ENCODE measurements at regions of chr12 and their contacts with region 1.

Region 1: DNA sequence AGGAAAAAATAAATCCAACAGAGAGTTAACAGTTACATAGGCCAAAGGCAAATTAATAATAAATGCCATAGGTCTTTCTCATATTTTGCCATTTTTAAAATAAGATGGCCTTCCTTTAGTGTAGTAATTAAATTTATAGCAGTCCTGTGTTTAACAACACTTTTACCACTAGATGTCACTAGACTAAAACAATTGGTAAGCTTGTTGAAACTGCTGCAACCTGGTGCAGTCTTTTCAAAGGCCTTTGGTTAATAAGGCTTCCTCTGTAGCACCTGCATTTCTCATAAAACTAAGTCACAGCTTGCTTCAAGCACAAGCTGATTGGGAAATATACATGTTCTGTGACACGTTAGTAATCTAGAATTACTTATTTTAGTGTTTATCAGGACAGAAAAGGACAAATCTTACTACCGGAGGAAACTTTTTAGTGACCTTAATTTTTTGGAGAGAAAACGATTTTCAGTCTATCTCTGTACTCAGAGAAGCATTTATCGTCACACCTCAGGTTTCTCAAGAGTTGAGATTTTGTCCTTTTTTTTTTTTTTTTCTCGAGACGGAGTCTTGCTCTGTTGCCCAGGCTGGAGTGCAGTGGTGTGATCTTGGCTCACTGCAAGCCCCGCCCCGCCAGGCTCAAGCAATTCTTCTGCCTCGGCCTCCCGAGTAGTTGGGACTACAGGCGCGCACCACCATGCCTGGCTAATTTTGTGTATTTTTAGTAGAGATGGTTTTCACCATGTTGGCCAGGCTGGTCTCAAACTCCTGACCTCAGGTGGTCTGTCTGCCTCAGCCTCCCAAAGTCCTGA is 20.0 kb downstream of the BORCS5 start:
- DNase-seq: no peak
- H3K4me3 ChIP-seq: no peak overlapping the region
- H3K27ac ChIP-seq: no peak overlapping the region
- H3K4me1 ChIP-seq: peaks cover 14% of the 10 kb centered on the region
- H3K27me3 ChIP-seq: no peaks in the 10 kb centered on the region
- CTCF ChIP-seq: peak; percentile 80

Region 2: GRCh38 chr12:12425616-12426015 is 48.8 kb after region 1 on chr12:
- intact Hi-C with region 1: no loop called
- DNase-seq: no peak
- H3K4me3 ChIP-seq: no peak overlapping the region
- H3K27ac ChIP-seq: no peak overlapping the region
- H3K4me1 ChIP-seq: peaks cover 12% of the 10 kb centered on the region
- H3K27me3 ChIP-seq: no peaks in the 10 kb centered on the region
- CTCF ChIP-seq: no peak

Region 3: DNA sequence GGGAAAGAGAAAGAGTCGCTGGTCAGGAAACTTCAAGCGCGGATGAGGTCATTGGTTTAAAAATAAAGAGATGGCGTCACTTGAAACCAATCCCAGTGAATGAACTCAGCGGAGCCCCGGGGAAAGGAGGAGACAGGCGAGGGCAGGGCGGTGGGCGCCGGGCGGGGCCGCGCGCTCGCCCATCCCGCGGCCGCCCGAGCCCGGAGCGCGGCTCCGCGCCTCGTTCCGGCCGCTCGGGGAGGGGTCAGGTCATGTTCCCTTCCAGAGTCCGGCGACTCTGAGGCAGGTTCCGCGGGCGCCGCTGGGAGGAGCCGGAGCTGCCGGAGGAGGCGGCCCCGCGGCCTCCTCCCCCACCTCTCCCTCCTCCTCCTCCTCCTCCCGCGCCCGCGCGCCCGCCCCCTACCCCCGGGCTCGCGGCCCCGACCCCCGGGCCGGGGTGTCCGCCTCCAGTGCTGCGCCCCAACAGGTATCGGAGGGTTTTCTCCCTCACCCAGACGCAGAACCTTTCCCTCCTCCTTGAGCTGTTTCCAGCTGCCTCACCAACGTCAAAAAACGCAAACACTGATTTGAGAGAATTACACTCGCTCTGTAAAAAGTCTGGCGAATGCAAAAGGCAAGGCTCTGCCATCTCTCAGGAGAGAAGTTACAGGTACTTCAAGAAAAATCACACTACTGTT is 185.9 kb after region 1 on chr12 and contains the start of gene DUSP16:
- intact Hi-C with region 1: loop called (anchors 5 kb)
- DNase-seq: peak; percentile 92
- H3K4me3 ChIP-seq: peak within 1 kb of the TSS; percentile 70
- H3K27ac ChIP-seq: peak within 1 kb of the TSS; percentile 100
- H3K4me1 ChIP-seq: peaks cover 34% of the 10 kb centered on the region
- H3K27me3 ChIP-seq: no peaks in the 10 kb centered on the region
- CTCF ChIP-seq: peak; percentile 46
- total RNA-seq, gene DUSP16: 16.4 TPM

Region 4: DNA sequence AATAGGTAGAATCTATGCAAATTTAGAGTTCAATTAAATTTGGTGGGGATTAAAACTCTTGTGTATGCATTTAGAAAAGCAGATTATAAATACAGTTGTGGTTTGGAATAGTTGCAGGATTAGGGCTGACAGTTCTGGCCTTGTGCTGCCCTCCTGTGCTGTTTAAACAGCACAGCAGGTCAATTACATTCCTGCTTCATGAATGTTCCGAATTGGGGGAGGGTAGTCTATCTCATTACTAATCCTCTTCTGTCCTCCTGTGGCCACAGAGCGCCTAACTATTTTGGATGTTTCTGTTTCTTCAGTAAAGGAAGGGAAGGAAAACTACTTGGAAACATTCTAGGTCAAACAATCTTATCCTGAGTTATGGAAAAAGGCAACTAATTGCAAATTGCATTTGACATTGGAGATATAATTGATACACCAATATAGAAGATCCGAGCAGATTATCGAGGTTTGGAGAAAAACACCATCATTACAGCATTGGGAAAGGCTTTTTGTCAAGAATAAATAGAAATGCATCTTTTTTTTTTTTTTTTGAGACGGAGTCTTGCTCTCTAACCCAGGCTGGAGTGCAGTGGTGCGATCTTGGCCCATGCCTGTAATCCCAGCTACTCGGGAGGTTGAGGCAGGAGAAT is 327.9 kb after region 1 on chr12:
- intact Hi-C with region 1: loop called (anchors 5 kb)
- DNase-seq: no peak
- H3K4me3 ChIP-seq: no peak overlapping the region
- H3K27ac ChIP-seq: no peak overlapping the region
- H3K4me1 ChIP-seq: peaks cover 6% of the 10 kb centered on the region
- H3K27me3 ChIP-seq: no peaks in the 10 kb centered on the region
- CTCF ChIP-seq: peak; percentile 82

Region 5: DNA sequence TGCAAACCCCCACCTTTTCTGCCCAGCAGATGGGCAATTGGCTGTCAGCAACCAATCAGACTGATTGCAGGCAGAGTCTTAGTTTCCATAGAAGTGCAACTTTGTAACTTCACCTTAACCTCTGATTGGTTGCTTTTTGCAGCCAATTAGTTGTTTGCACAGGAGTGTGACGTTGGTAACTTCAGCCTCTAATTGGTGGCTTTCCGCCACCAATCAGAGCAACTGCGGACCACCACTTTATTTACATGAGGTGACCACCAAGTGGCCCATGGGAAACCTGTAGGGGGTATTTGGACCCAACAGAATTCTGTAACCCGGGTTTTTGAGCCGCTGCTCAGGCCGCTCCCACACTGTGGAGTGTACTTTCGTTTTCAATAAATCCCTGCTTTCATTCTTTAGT is 372.6 kb after region 1 on chr12:
- intact Hi-C with region 1: no loop called
- DNase-seq: no peak
- H3K4me3 ChIP-seq: peak overlapping the region; percentile 42
- H3K27ac ChIP-seq: no peak overlapping the region
- H3K4me1 ChIP-seq: no peaks in the 10 kb centered on the region
- H3K27me3 ChIP-seq: no peaks in the 10 kb centered on the region
- CTCF ChIP-seq: no peak

Measured in left ventricle myocardium inferior (tissue), 1 donor.